Mammary epithelial cell (primary cell): ENCODE measurements at regions of chr1 and their contacts with region 1.

Region 1: DNA sequence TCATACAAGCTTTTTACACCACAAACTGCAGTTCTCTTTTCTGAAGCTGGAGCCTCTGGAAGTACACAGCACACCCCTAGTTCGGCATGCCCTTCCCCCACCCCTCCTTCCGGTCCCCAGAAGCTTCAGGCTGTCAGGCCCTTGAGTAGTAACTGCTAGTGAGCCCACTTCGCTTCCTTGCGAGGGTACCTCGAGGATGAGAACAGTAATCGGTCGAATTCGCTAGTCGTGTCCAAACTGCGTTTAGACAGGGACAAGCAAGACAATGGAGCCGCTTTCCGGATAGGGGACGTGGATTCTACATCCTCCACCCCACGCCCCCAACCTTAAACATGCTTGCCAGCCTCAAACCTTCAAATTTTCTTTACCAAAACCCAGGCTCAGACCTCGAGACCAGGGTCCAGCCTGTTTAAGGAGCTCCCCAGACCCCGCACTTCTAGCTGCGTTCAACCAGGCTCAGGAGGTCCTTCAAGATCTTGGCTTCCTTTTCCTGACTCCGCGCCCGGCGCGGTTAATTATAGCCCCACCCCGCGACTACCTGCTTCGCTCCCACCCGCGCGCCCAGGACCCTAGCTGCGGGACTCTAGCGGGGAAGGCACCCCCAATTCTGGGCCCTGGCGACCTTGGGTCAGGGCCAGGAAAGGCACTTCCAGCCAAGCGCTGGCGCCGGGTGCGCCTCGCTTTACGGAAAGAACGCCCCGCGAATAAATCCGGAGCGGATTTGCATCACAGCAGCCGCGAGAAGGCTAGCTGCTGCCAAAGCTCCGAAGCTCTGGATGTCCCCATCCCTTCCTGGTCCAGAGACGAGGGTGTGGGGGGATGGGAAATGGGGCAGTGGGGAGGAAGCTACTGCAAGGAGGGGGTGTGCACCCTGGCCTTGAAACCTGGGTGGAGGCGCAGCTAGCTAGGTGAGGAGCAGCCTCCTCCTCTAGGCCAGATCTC is 8.1 kb upstream of the TSPAN1 start:
- DNase-seq: no peak
- H3K4me3 ChIP-seq: no peak overlapping the region
- H3K27ac ChIP-seq: no peak overlapping the region
- H3K4me1 ChIP-seq: peaks cover 10% of the 10 kb centered on the region
- H3K27me3 ChIP-seq: no peaks in the 10 kb centered on the region
- CTCF ChIP-seq: no peak

Region 2: DNA sequence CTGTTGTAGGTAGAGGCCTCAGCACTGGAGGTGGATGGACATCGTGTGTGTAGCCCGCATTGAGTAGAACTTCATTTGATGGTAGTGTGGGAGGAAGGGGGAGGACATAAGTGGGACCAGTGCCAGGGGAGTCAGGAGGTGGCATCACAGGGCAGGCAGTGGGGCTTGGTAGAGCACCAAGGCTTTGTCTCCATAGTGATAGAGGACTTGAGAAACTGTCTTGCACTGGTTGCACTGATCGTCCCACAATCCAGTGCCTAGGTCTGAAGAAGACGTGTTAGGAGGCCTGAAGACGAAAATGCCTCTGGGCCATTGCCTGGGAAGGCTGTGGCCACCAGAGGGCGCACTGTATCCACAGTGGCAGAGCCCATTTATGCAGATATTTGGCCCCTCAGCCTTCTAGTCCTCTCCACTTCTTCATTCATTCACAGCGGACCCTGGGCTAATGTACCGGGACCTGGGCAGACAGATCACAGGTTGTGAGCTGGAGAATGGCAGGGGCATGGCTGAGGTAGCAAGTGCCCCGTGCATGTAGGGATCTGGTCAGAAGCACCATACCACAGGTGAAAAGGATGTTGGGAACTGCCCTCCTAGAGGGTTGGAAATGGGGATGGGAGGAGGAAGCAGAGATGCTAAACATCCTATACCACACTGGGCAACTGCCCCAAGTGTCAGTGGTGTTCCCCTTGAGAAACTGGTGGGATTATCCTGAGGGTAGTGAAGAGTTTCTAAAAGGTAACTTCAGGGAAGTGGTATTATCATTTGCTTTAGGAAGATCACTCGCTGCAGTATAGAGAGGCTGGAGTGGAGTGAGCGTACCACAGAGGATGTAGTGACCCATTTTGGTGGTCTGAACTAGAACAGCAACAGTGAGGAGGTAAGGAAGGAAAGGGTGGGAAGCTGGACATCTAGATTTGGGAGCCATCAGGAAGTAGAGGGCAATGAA is 129.6 kb before region 1 on chr1:
- CTCF ChIA-PET with region 1: no interaction called
- dilution Hi-C with region 1: loop called (anchors 10 kb)
- in situ Hi-C with region 1: no loop called
- intact Hi-C with region 1: no loop called
- DNase-seq: peak; percentile 65
- H3K4me3 ChIP-seq: no peak overlapping the region
- H3K27ac ChIP-seq: no peak overlapping the region
- H3K4me1 ChIP-seq: peaks cover 8% of the 10 kb centered on the region
- H3K27me3 ChIP-seq: no peaks in the 10 kb centered on the region
- CTCF ChIP-seq: peak; percentile 96 to 98

Region 3: GRCh38 chr1:46084553-46085451 is 82.0 kb before region 1 on chr1:
- CTCF ChIA-PET with region 1: no interaction called
- dilution Hi-C with region 1: no loop called
- in situ Hi-C with region 1: no loop called
- intact Hi-C with region 1: no loop called
- DNase-seq: peak; percentile 66
- H3K4me3 ChIP-seq: no peak overlapping the region
- H3K27ac ChIP-seq: peak overlapping the region; percentile 88
- H3K4me1 ChIP-seq: peaks cover 15% of the 10 kb centered on the region
- H3K27me3 ChIP-seq: no peaks in the 10 kb centered on the region
- CTCF ChIP-seq: no peak

Region 4: DNA sequence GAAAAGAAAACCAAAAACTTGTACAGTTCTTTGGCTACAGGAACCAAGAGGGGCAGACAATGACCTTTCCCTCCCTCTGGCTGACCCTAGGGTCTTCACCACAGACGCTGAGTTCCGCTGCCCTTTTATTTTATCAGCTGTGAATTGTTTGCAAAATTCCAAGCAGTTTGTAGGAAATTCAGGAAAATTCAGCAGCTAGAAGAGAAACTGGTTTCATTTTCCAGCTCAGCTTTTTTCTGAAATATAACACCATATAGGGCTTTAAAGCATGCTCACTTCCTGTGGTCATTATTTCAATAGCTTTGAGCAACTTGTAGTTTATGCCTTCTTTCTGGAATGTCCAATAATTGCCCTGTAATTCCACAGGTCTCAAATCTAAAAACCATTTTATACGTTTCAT is 28.9 kb before region 1 on chr1:
- CTCF ChIA-PET with region 1: no interaction called
- dilution Hi-C with region 1: no loop called
- in situ Hi-C with region 1: no loop called
- intact Hi-C with region 1: no loop called
- DNase-seq: no peak
- H3K4me3 ChIP-seq: no peak overlapping the region
- H3K27ac ChIP-seq: no peak overlapping the region
- H3K4me1 ChIP-seq: peaks cover 17% of the 10 kb centered on the region
- H3K27me3 ChIP-seq: no peaks in the 10 kb centered on the region
- CTCF ChIP-seq: no peak

Region 5: DNA sequence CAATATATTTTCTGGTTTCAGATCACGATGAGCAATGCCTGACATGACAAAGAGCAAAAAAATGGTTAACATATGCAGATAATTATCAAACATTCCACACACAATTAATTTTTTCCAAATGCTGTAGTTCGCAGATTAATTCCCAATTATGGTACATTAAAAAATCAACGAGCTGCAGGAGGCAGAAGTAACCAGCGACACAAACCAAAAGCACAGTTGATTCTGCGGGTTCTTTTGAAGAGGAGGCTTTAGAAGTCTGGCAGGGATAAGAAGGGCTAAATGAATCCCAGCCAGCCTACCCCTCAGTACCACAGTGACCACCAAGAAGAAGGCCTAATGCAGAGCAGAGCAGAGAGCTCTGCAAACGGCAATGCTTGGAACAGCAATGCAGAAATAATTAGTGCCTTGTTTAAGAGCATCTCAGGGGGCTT is 401.7 kb after region 1 on chr1:
- CTCF ChIA-PET with region 1: no interaction called
- dilution Hi-C with region 1: no loop called
- in situ Hi-C with region 1: no loop called
- intact Hi-C with region 1: no loop called
- DNase-seq: no peak
- H3K4me3 ChIP-seq: no peak overlapping the region
- H3K27ac ChIP-seq: no peak overlapping the region
- H3K4me1 ChIP-seq: no peaks in the 10 kb centered on the region
- H3K27me3 ChIP-seq: no peaks in the 10 kb centered on the region
- CTCF ChIP-seq: no peak